PC-3 (cell line): ENCODE measurements at regions of chrX and their contacts with region 1.

Region 1: DNA sequence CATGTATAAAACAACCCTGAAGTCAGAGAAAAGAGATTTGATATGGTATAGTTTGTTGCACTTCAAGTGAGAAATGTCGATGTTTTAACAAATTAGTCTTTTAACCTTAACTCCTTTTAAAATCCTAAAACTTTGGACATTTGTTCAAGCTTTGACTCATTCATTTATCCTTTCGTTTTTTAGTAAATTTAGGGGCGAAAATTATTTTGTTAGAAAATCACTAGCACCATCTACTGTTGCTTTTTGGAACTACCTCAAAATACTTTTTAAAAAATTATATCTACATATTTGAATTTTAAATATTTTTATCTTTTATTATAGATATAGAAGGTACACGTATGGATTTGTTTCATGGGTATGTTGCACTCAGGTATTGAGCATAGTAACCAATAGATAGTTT is 165.1 kb upstream of the POF1B start:
- DNase-seq: peak; percentile 37
- ATAC-seq: no peak
- H3K4me3 ChIP-seq: 0 out of 2 replicates have a peak overlapping the region, but pooled peaks have one; percentile 27
- H3K27ac ChIP-seq: no peak overlapping the region
- H3K4me1 ChIP-seq: no peaks in the 10 kb centered on the region
- H3K27me3 ChIP-seq: no peaks in the 10 kb centered on the region
- CTCF ChIP-seq: peak; percentile 34

Region 2: GRCh38 chrX:84729809-84730208 is 814.8 kb before region 1 on chrX:
- CTCF ChIA-PET with region 1: no interaction called
- POLR2A ChIA-PET with region 1: no interaction called
- intact Hi-C with region 1: loop called (anchors 10 kb)
- DNase-seq: peak; percentile 42
- ATAC-seq: peak; percentile 97
- H3K4me3 ChIP-seq: no peak overlapping the region
- H3K27ac ChIP-seq: no peak overlapping the region
- H3K4me1 ChIP-seq: no peaks in the 10 kb centered on the region
- H3K27me3 ChIP-seq: no peaks in the 10 kb centered on the region
- CTCF ChIP-seq: peak; percentile 85

Region 3: GRCh38 chrX:85111347-85111746 is 433.3 kb before region 1 on chrX:
- CTCF ChIA-PET with region 1: interaction called, 4 read pairs
- POLR2A ChIA-PET with region 1: no interaction called
- intact Hi-C with region 1: loop called (anchors 1 kb)
- DNase-seq: peak; percentile 32
- ATAC-seq: no peak
- H3K4me3 ChIP-seq: no peak overlapping the region
- H3K27ac ChIP-seq: no peak overlapping the region
- H3K4me1 ChIP-seq: no peaks in the 10 kb centered on the region
- H3K27me3 ChIP-seq: no peaks in the 10 kb centered on the region
- CTCF ChIP-seq: peak; percentile 70

Region 4: DNA sequence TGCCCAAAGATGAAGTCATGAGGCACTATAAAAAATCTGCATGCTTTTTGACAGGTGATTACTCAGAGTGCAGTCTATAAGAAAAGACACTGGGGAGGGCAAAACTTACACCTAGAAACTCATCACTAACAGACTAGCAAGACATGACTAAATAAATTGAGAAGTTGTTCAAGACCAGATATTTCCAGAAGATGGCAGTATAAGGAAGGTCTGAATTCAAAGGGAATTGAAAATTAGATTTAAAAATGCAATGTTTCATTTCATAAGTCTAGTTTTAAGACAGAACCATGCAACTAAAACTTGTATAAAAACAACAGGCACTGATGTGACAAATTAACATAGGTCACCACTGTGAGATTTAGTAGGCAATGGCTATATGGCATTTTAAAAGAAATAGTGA is 67.3 kb after region 1 on chrX:
- CTCF ChIA-PET with region 1: no interaction called
- POLR2A ChIA-PET with region 1: no interaction called
- intact Hi-C with region 1: no loop called
- DNase-seq: peak; percentile 42
- ATAC-seq: no peak
- H3K4me3 ChIP-seq: no peak overlapping the region
- H3K27ac ChIP-seq: no peak overlapping the region
- H3K4me1 ChIP-seq: no peaks in the 10 kb centered on the region
- H3K27me3 ChIP-seq: no peaks in the 10 kb centered on the region
- CTCF ChIP-seq: peak; percentile 59

Region 5: DNA sequence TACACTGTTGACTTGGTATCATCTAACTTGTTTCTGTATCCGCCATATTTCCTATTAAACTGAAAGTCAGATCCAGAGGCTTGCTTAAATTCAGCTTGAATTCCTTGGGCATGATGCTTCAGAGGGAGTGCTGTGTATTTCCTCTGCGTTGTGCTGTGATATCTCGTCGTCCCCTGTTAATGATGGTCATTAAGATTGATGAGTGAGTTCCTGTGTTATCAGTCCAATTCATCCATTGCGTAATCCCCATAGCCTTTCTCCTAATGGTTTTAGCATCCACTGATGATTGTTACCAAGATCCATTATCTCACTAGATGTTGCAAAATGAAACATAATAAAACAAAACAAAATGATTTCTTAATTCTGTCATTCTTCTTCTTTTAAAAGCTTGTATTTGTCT is 534.0 kb after region 1 on chrX:
- CTCF ChIA-PET with region 1: no interaction called
- POLR2A ChIA-PET with region 1: no interaction called
- intact Hi-C with region 1: no loop called
- DNase-seq: no peak
- ATAC-seq: no peak
- H3K4me3 ChIP-seq: no peak overlapping the region
- H3K27ac ChIP-seq: no peak overlapping the region
- H3K4me1 ChIP-seq: no peaks in the 10 kb centered on the region
- H3K27me3 ChIP-seq: no peaks in the 10 kb centered on the region
- CTCF ChIP-seq: no peak